K562 (cell line): ENCODE measurements at regions of chr17 and their contacts with region 1.

Region 1: GRCh38 chr17:80991645-80992076 is at the start of gene CHMP6:
- DNase-seq: peak; percentile 86 to 92 (median 90)
- ATAC-seq: peak; percentile 41
- H3K4me3 ChIP-seq: peak within 1 kb of the TSS; percentile 97
- H3K27ac ChIP-seq: peak within 1 kb of the TSS; percentile 70
- H3K4me1 ChIP-seq: peaks cover 9 to 75% of the 10 kb centered on the region in 2 experiments; a peak in 4 of 5 replicates
- H3K27me3 ChIP-seq: no peaks in the 10 kb centered on the region
- CTCF ChIP-seq: peak in 2 of 3 experiments; percentile 38 to 66; a peak in 3 of 6 replicates
- EP300 ChIP-seq: no peak
- POLR2A ChIP-seq: no peak
- RAD21 ChIP-seq: peak in 1 of 2 experiments; percentile 31; a peak in 2 of 4 replicates
- polyA plus RNA-seq, gene CHMP6: 0.25 to 1.8 TPM

Region 2: GRCh38 chr17:80970044-80970761 is 21.5 kb before region 1 on chr17:
- CTCF ChIA-PET with region 1: no interaction called
- POLR2A ChIA-PET with region 1: no interaction called
- in situ Hi-C with region 1: no loop called
- intact Hi-C with region 1: no loop called
- DNase-seq: peak in 3 of 4 experiments; percentile 34 to 52 (median 40)
- ATAC-seq: peak; percentile 77
- H3K4me3 ChIP-seq: no peak overlapping the region
- H3K27ac ChIP-seq: no peak overlapping the region
- H3K4me1 ChIP-seq: peaks cover 0 to 49% of the 10 kb centered on the region in 2 experiments; a peak in 4 of 5 replicates
- H3K27me3 ChIP-seq: peaks cover 15 to 20% of the 10 kb centered on the region in 2 experiments
- CTCF ChIP-seq: peak; percentile 48 to 60 (median 48)
- EP300 ChIP-seq: no peak
- POLR2A ChIP-seq: no peak
- RAD21 ChIP-seq: peak in 1 of 2 experiments; percentile 57; a peak in 2 of 4 replicates

Region 3: DNA sequence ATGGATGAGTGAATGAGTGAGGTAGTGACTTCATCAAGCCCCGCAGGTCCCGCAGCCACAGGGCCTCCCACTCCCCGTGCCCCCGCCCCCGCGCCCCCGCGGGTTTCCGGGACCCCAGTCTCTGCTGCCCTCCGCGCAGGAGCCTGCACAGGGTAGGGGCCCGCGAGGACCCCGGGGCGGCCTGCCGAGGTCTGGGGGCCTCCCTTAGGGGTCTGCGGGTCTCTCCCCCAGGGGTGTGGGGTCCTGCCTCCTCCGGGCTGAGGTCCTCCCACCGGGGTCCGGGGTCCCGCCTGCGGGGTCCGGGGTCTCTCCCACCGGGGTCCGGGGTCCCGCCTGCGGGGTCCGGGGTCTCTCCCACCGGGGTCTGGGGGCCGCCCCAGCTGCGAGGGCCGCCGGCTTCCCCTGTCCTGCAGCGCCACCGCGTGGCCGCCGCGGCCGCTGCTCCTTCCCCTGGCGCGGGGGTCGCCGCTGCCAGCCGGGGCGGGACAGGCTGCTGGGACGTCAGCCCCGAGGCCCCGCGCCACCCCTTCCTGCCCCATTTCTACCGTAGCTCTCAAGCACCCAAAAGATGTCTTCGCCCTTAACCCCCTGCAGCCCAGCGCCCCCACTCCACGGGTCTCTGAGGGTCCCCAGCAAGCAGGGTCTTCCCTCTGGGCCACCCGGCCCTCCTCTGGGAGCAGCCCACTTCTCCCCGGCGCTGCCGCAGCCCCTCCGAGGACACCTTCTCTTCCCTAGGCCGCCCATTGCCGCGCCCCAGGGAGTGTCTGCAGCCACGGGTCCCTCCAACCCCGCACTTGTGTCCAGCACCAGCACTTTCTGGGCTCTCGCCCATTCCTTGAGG is 10.4 kb before region 1 on chr17:
- CTCF ChIA-PET with region 1: no interaction called
- POLR2A ChIA-PET with region 1: no interaction called
- in situ Hi-C with region 1: no loop called
- intact Hi-C with region 1: no loop called
- DNase-seq: peak in 3 of 4 experiments; percentile 80 to 83 (median 82)
- ATAC-seq: peak; percentile 84
- H3K4me3 ChIP-seq: peak overlapping the region; percentile 22; the same call in 1 of the 2 replicates
- H3K27ac ChIP-seq: no peak overlapping the region
- H3K4me1 ChIP-seq: peaks cover 0 to 38% of the 10 kb centered on the region in 2 experiments; a peak in 3 of 5 replicates
- H3K27me3 ChIP-seq: peaks cover 12 to 31% of the 10 kb centered on the region in 2 experiments; a peak in 4 of 5 replicates
- CTCF ChIP-seq: peak; percentile 59 to 77 (median 61)
- EP300 ChIP-seq: no peak
- POLR2A ChIP-seq: no peak
- RAD21 ChIP-seq: peak; percentile 75 to 88

Region 4: DNA sequence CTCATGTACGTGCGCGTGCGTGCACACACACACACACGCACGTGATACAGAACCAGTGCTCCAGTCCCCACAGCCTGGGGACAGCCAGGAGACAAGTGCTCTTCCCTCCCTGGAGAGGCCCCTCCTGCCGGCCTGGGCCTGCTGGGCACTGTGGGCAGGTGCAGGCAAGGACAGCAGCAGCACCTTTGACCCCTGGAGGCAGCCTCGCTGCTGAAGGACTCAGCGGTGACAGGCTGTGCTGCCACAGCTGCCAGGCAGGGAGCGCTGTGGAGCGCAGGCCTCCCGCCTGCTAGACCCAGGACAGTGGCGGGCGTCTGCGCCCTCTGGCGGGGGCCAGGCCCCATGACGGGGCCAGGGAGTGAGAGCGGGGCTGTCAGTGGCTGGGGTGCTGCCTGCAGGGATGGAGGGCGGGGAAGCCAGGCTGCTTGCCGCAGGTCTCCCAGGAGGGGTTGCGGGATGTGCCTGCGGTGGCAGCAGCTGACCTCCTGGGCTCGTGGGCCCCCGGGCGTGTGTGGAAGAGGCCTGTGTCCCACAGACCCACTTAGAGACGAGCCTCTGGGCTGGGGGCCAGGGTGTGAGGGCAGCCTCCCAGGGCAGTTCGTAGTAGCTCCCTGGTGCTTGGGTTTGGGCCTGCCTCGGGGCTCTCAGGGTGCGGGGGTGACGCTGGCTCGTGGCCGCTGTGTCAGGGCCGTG is 110.1 kb after region 1 on chr17:
- CTCF ChIA-PET with region 1: interaction called, 64 read pairs
- POLR2A ChIA-PET with region 1: no interaction called
- in situ Hi-C with region 1: loop called (anchors 5 kb)
- intact Hi-C with region 1: loop called (anchors 1 kb)
- DNase-seq: peak; percentile 92 to 95 (median 94)
- ATAC-seq: peak; percentile 92
- H3K4me3 ChIP-seq: no peak overlapping the region
- H3K27ac ChIP-seq: no peak overlapping the region
- H3K4me1 ChIP-seq: peaks cover 20 to 90% of the 10 kb centered on the region in 2 experiments
- H3K27me3 ChIP-seq: no peaks in the 10 kb centered on the region
- CTCF ChIP-seq: peak; percentile 100
- EP300 ChIP-seq: peak; percentile 43; the same call in 1 of the 2 replicates
- POLR2A ChIP-seq: no peak
- RAD21 ChIP-seq: peak; percentile 97 to 99